ENCODE measurements at regions of chr2 and their contacts with region 1.

Region 1: DNA sequence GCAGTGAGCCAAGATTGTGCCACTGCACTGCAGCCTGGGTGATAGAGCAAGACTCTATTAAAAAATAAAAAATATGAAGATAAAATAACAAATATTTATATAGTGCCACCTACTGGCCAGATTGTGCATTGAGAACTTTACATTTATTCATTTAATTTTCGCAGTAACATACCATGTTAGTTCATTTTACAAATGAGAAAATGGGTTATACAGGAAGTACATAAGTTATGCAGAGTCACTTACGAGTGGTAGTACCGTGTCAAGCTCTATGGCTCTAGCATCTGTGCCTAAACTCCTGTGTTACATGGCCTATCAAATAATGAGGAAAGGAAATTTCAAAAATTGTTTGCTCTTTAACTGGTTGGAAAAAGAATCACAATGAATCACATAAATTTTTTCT is 27.9 kb downstream of the RIF1 start:
- ATAC-seq: peak in 3 of 8 experiments; percentile 23 to 54 (median 47)
- H3K4me3 ChIP-seq: no peak overlapping the region
- H3K27ac ChIP-seq: no peak overlapping the region
- H3K4me1 ChIP-seq: no peaks in the 10 kb centered on the region

Region 2: GRCh38 chr2:150599889-150600288 is 837.7 kb before region 1 on chr2:
- in situ Hi-C with region 1: no loop called
- ATAC-seq: no peak
- H3K4me3 ChIP-seq: no peak overlapping the region
- H3K27ac ChIP-seq: no peak overlapping the region
- H3K4me1 ChIP-seq: no peaks in the 10 kb centered on the region

Region 3: DNA sequence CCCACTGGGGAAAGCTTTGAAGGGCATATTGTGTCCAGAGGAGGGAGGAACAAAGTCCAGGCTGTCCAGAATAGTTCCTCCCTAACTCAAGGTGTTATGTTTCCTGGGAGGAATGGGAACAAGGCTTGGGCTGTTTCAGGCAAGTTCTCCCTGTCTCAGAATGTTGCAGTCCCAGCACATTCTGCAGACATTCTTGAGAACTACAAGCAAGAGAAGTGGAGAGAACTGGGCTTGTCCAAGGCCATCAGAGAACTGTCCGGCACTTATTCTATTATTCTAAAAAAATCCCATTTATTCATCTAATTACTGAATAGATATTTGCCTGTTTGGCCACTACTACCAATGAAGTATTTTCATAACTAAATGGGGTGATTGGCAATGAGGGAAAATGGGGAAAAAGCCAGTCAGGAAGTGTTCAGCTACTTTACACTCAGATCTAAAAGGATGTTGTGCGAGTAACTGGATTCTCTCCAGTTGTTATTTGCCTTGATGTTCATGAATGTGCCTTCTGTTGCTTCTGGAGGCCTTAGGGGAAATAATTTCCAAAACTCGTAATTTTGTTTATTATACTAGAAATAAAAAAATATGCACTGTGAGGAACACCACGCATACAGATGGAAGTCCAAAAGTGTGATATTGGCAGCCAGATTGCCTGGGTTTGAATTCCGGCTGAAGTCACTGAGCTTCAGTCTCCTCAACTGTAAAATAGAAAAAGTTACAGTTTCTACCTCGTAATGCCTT is 650.1 kb before region 1 on chr2:
- in situ Hi-C with region 1: no loop called
- ATAC-seq: no peak
- H3K4me3 ChIP-seq: no peak overlapping the region
- H3K27ac ChIP-seq: no peak overlapping the region
- H3K4me1 ChIP-seq: no peaks in the 10 kb centered on the region

Region 4: DNA sequence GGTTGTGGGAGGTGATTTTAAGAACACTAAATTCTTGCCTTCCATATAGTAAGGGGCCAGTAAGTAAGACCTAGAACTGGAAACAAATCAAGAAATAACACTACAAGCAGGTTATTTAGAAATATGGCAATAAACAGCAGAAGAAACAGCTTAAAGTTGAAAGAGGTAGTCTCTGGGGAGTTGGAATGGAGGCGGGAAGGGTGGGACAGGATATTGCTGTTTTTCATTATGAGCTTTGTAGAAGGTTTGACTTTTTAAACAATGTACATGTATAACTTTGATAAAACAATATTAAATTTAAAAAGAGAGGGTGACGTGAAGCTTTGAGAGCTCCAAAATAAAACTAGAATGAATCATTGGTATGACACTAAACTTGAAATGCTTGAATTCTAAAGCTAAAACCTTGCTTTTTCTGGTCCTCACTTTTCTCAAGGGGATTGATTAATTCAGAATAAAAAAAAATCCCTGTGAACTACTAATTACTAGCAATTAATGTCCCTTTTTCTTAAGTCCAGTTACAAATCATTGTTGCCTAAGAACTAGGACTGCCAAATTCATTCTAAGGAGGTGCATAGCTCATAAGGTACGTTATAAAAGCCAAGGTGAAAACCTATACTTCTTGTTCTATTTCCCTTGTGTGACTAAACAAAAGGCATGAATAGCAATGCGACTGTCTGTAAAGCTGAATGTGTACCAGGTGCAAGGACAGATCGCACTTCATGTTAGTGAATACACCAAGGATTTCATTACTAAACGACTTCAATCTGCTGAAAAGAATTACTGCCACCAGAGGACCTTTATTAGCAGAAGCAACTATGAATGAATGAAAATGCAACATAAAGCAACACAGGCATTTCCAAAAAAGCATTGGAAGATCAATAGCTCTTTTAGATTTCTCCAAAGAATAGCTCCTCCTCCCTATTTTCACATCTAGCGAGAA is 353.5 kb before region 1 on chr2:
- in situ Hi-C with region 1: no loop called
- ATAC-seq: peak in 5 of 8 experiments; percentile 17 to 54 (median 36)
- H3K4me3 ChIP-seq: no peak overlapping the region
- H3K27ac ChIP-seq: no peak overlapping the region
- H3K4me1 ChIP-seq: peaks cover 12 to 16% of the 10 kb centered on the region in 2 donors

Region 5: DNA sequence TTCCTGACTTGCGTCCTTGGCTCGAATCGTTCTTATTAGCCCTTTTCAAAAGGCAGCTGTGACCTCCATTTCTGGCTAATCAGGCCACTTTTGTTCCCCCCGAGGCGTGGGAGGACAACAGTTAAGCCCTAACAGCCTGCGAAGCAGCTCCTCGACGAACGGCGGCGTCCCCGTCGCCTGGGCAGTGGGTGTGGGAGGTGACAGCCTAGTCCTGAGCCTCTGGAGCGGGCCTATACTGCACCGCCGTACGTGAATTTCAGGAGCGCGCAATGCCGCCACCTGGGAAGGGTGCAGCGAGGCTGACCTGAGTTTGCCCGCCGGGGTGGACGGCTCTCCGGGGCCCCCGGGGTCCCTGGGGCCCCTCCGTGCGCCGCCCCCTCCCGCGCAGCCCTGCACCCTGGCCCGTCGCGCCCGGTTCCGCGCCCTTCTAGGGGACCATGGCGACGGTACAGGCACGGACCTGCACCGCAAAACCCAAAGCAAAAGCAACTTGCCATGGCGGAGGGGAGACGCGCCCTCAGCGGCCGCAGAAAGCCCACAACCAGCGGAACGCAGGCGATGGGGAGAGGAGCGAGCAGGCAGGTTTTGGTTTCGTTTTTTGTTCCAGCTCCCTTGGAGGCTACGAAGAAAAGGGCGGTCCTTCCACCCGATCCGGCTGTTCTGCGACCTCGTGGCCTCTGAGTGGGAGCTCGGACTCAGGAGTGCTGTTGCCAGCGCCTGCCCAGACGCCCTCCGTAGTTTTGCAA is 176.2 kb before region 1 on chr2 and contains the start of gene RBM43:
- in situ Hi-C with region 1: loop called in 1 of 9 experiments (anchors 25 kb)
- ATAC-seq: peak; percentile 79 to 94 (median 86)
- H3K4me3 ChIP-seq: peak within 1 kb of the TSS; percentile 33 to 42 (median 36)
- H3K27ac ChIP-seq: no peak within 1 kb of the TSS
- H3K4me1 ChIP-seq: peaks cover 3 to 4% of the 10 kb centered on the region in 2 donors
- total RNA-seq, gene RBM43: 0.22 to 10.6 (median 2.2) TPM